ENCODE measurements at regions of chr4 and their contacts with region 1.

Region 1: GRCh38 chr4:112765317-112765975 is 128.5 kb downstream of the LARP7 start:
- DNase-seq: no peak
- H3K4me3 Mint-ChIP-seq: no peak overlapping the region
- H3K27ac Mint-ChIP-seq: no peak overlapping the region
- H3K4me1 Mint-ChIP-seq: no peaks in the 10 kb centered on the region
- H3K27me3 Mint-ChIP-seq: no peaks in the 10 kb centered on the region

Region 2: DNA sequence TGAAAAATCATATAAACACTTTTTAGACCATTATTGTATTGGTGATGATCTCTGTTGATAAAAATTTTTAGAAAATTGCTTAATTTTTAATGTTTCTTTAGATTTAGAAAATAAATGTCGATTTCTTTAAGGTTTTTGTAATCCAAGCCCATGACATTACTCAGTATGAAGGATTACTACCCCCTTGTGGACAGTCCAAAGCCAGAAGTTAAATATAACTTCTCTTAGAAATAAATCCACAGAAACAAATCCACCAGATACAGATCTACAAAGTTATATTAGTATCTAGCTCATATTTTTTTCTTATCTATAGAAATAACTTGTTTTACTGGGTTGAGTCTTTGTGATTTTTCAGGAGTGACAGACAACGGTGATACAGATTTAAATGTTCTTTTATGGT is 498.6 kb before region 1 on chr4:
- CTCF ChIA-PET with region 1: no interaction called
- DNase-seq: no peak
- H3K4me3 Mint-ChIP-seq: no peak overlapping the region
- H3K27ac Mint-ChIP-seq: no peak overlapping the region
- H3K4me1 Mint-ChIP-seq: no peaks in the 10 kb centered on the region
- H3K27me3 Mint-ChIP-seq: no peaks in the 10 kb centered on the region

Region 3: GRCh38 chr4:112938461-112939058 is 173.1 kb after region 1 on chr4:
- CTCF ChIA-PET with region 1: interaction called, 22 read pairs
- DNase-seq: no peak
- H3K4me3 Mint-ChIP-seq: no peak overlapping the region
- H3K27ac Mint-ChIP-seq: no peak overlapping the region
- H3K4me1 Mint-ChIP-seq: no peaks in the 10 kb centered on the region
- H3K27me3 Mint-ChIP-seq: peaks cover 4% of the 10 kb centered on the region

Measured in activated naive CD4-positive, alpha-beta T cell treated with anti-CD3 and anti-CD28 coated beads, Interleukin-2, amount 10 ng/mL, durations not matched to agents 7 days and 5 days (primary cell).